ENCODE measurements at regions of chrX and their contacts with region 1.

Region 1: DNA sequence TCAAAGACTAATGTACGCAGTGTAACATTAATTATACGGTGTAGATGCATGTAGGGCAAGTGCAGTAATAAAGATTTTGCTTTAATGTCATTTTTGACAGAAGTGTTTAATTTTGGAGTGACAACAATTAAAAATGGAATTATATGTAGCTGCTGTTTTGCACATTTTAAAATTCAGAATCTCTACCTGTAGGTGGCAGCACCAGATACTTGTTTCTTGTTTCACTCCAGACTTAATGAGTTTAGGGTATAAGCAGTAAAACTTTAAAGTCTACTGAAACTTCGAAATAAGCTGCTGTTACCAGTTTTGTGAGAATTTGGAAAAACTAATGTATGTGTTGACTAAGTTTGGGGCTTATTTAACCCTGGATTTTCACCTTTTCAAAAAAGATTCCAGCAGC is 144.9 kb downstream of the POLA1 start:
- DNase-seq: peak; percentile 27
- H3K4me3 ChIP-seq: no peak overlapping the region
- H3K27ac ChIP-seq: no peak overlapping the region
- H3K4me1 ChIP-seq: no peaks in the 10 kb centered on the region
- H3K27me3 ChIP-seq: no peaks in the 10 kb centered on the region

Region 2: GRCh38 chrX:25144043-25144940 is 305.7 kb after region 1 on chrX:
- in situ Hi-C with region 1: loop called (anchors 25 kb)
- DNase-seq: peak; percentile 72
- H3K4me3 ChIP-seq: peak overlapping the region; percentile 48; the same call in 1 of the 2 replicates
- H3K27ac ChIP-seq: no peak overlapping the region
- H3K4me1 ChIP-seq: no peaks in the 10 kb centered on the region
- H3K27me3 ChIP-seq: peaks cover 6% of the 10 kb centered on the region; the same call in 1 of the 2 replicates

Measured in GM23248 (cell line).